ENCODE measurements at regions of chrX and their contacts with region 1.

Region 1: DNA sequence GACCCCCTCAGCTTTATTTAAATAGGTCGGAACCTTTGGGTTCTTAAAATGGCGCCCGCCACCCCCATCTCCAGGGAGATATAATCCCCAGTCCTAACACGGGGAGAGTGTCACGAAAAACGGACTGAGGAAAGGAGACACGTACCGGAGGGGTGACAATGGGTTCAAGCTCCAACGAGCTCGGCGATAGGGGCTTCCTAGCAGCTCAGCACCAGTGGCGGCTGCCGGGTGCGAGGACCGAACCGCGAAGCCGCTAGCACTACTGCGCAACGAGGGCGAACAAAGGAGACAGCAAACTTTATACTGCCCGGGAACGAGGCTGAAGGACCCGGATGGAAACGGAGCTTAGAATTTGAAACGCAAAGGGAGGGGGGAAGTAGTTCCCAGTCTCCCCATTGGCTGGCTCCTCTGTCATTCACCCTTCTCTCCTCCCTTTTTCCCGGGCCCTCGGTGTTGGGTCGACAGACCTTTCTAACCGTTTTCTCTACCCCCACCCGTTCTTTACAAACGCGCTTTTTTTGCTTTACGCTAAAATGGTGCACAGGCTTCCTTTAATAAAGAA is at the start of gene RBMX:
- DNase-seq: peak; percentile 70
- ATAC-seq: peak; percentile 87
- H3K4me3 Mint-ChIP-seq: peak within 1 kb of the TSS; percentile 93
- H3K27ac Mint-ChIP-seq: peak within 1 kb of the TSS; percentile 98
- H3K4me1 Mint-ChIP-seq: peaks cover 9% of the 10 kb centered on the region
- H3K27me3 Mint-ChIP-seq: no peaks in the 10 kb centered on the region
- CTCF ChIP-seq: no peak
- total RNA-seq, gene RBMX: 259 and 260 TPM in 2 replicates

Region 2: GRCh38 chrX:136747003-136747986 is 133.2 kb before region 1 on chrX:
- CTCF ChIA-PET with region 1: no interaction called
- POLR2A ChIA-PET with region 1: interaction called, 38 read pairs
- intact Hi-C with region 1: loop called (anchors 1 kb)
- DNase-seq: no peak
- ATAC-seq: peak; percentile 81
- H3K4me3 Mint-ChIP-seq: peak overlapping the region; percentile 69
- H3K27ac Mint-ChIP-seq: peak overlapping the region; percentile 95
- H3K4me1 Mint-ChIP-seq: peaks cover 79% of the 10 kb centered on the region
- H3K27me3 Mint-ChIP-seq: no peaks in the 10 kb centered on the region
- CTCF ChIP-seq: no peak

Region 3: GRCh38 chrX:136780763-136781162 is 99.8 kb before region 1 on chrX and contains the start of gene ARHGEF6:
- CTCF ChIA-PET with region 1: no interaction called
- POLR2A ChIA-PET with region 1: interaction called, 29 read pairs
- intact Hi-C with region 1: loop called (anchors 5 kb)
- DNase-seq: no peak
- ATAC-seq: no peak
- H3K4me3 Mint-ChIP-seq: peak within 1 kb of the TSS; percentile 90
- H3K27ac Mint-ChIP-seq: peak within 1 kb of the TSS; percentile 92
- H3K4me1 Mint-ChIP-seq: peaks cover 54% of the 10 kb centered on the region
- H3K27me3 Mint-ChIP-seq: no peaks in the 10 kb centered on the region
- CTCF ChIP-seq: no peak
- total RNA-seq, gene ARHGEF6: 32.4 and 33.0 TPM in 2 replicates

Region 4: GRCh38 chrX:136909706-136910564 is 29.4 kb after region 1 on chrX:
- CTCF ChIA-PET with region 1: interaction called, 3 read pairs
- POLR2A ChIA-PET with region 1: interaction called, 33 read pairs
- intact Hi-C with region 1: loop called (anchors 1 kb)
- DNase-seq: peak; percentile 32
- ATAC-seq: peak; percentile 74
- H3K4me3 Mint-ChIP-seq: peak overlapping the region; percentile 95
- H3K27ac Mint-ChIP-seq: peak overlapping the region; percentile 87
- H3K4me1 Mint-ChIP-seq: peaks cover 6% of the 10 kb centered on the region
- H3K27me3 Mint-ChIP-seq: no peaks in the 10 kb centered on the region
- CTCF ChIP-seq: no peak

Measured in activated B cell treated with CpG ODN at 0.5 μM for 24 hours (primary cell).